A549 (cell line): ENCODE measurements at regions of chr11 and their contacts with region 1.

Region 1: DNA sequence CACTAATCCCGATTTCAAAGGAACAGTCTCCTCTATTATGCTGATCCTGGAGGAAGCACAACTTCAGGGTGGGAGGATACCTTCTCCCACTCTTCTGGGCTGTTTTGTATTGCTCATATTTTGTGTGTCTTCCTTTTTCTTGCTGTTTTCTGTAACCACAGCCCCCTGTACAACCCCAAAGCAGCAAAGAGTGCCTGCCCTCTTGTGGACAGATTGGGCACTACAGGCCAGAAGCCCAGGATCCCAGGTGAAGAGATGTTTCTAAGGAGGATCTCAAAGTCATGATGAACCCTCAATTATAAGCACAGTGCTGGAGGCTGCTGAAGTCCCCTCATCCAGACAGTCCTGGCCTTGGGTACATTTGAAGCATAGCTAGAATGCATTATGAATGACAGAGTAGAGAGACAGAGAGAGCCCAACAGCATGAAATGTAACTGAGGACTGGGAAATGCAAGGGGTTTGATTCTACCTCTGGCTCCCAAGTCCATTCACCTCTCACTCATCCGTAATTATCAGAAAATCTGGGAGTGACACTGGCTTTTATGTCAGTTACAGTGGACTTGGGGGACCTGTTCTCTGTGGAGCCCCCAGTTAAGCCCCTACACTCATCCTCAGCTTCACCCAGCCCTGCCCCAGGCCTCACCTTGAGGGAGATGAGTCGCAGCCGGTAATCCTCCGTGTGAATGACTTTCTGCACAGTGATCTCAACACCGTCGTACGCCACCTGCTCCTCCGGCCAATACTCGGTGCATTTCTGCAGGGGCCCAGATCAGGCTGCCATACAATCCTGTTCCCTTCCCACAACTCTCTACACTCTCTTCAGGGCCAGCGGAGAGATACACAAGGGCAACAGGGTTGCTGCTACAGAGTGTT is 6.2 kb upstream of the IGSF22 start:
- DNase-seq: peak; percentile 43 to 84
- ATAC-seq: peak; percentile 65 to 84; a peak in 5 of 6 replicates
- H3K4me3 ChIP-seq: no peak overlapping the region
- H3K27ac ChIP-seq: no peak overlapping the region
- H3K4me1 ChIP-seq: no peaks in the 10 kb centered on the region
- CTCF ChIP-seq: peak; percentile 86
- EP300 ChIP-seq: no peak
- POLR2A ChIP-seq: no peak
- RAD21 ChIP-seq: peak; percentile 70 to 75

Region 2: DNA sequence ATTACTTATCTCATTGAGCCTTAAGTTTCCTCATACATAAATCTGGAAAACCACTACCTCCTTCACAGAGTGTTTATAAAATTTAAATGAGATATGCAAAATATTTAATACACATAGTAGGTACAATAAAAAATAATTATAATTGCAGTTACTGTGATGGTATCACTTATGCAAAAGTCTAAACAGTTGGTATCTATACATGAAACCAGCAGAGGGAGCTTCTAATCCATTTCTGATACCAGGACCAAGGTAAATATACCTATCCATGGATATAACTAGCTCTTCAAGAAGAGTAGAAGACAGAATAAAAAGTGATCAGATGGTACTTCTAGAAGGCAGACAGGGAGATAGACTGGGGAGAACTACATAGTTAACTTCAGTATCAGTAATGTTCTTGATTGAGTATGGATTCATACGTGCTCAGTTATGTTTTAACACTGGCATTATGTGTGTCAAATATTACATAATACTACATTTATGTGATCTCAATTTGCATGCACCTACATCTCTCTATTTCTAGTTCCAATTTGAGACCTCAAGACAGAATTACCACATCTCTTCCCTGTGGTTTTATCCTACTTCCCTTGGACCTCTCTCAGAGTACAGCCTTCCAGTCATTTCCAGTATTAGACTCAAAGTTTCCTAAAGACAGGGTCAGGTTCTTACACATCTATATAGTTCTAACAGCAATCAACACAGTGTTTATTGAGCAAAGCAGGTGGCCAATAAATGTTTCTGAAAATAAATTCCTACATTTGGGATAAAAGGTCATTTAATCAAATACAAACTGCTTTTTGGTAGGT is 191.8 kb before region 1 on chr11:
- CTCF ChIA-PET with region 1: interaction called, 11 read pairs
- POLR2A ChIA-PET with region 1: no interaction called
- DNase-seq: peak in 1 of 2 experiments; percentile 48
- ATAC-seq: peak; percentile 81 to 87; a peak in 5 of 6 replicates
- H3K4me3 ChIP-seq: no peak overlapping the region
- H3K27ac ChIP-seq: no peak overlapping the region
- H3K4me1 ChIP-seq: no peaks in the 10 kb centered on the region
- CTCF ChIP-seq: peak; percentile 77
- EP300 ChIP-seq: no peak
- POLR2A ChIP-seq: no peak
- RAD21 ChIP-seq: peak; percentile 73 to 74

Region 3: GRCh38 chr11:18721561-18722292 is 10.5 kb before region 1 on chr11:
- CTCF ChIA-PET with region 1: interaction called, 45 read pairs
- POLR2A ChIA-PET with region 1: no interaction called
- DNase-seq: peak; percentile 64 to 75
- ATAC-seq: peak; percentile 77 to 88
- H3K4me3 ChIP-seq: peak overlapping the region; percentile 64
- H3K27ac ChIP-seq: peak overlapping the region; percentile 18 to 77
- H3K4me1 ChIP-seq: no peaks in the 10 kb centered on the region
- CTCF ChIP-seq: peak; percentile 54
- EP300 ChIP-seq: no peak
- POLR2A ChIP-seq: no peak
- RAD21 ChIP-seq: peak; percentile 17 to 41; a peak in 1 of 5 replicates

Region 4: GRCh38 chr11:18757811-18758210 is 25.6 kb after region 1 on chr11:
- CTCF ChIA-PET with region 1: interaction called, 137 read pairs
- POLR2A ChIA-PET with region 1: no interaction called
- DNase-seq: no peak
- ATAC-seq: no peak
- H3K4me3 ChIP-seq: no peak overlapping the region
- H3K27ac ChIP-seq: no peak overlapping the region
- H3K4me1 ChIP-seq: peaks cover 12% of the 10 kb centered on the region; the same call in 1 of the 3 replicates
- CTCF ChIP-seq: no peak
- EP300 ChIP-seq: no peak
- POLR2A ChIP-seq: no peak
- RAD21 ChIP-seq: no peak

Region 5: GRCh38 chr11:18775492-18776292 is 43.5 kb after region 1 on chr11:
- CTCF ChIA-PET with region 1: interaction called, 11 read pairs
- POLR2A ChIA-PET with region 1: no interaction called
- DNase-seq: peak; percentile 65 to 76
- ATAC-seq: peak; percentile 91 to 97
- H3K4me3 ChIP-seq: no peak overlapping the region
- H3K27ac ChIP-seq: no peak overlapping the region
- H3K4me1 ChIP-seq: no peaks in the 10 kb centered on the region
- CTCF ChIP-seq: peak; percentile 80
- EP300 ChIP-seq: no peak
- POLR2A ChIP-seq: no peak
- RAD21 ChIP-seq: peak; percentile 65 to 80